ENCODE measurements at regions of chr12 and their contacts with region 1.

Region 1: GRCh38 chr12:110742718-110743570 is at the start of gene PPP1CC:
- DNase-seq: peak; percentile 88
- H3K4me3 Mint-ChIP-seq: peak within 1 kb of the TSS; percentile 100
- H3K27ac Mint-ChIP-seq: peak within 1 kb of the TSS; percentile 99
- H3K4me1 Mint-ChIP-seq: peaks cover 45% of the 10 kb centered on the region
- H3K27me3 Mint-ChIP-seq: no peaks in the 10 kb centered on the region
- total RNA-seq, gene PPP1CC: 449 and 469 TPM in 2 replicates

Region 2: GRCh38 chr12:110583137-110584059 is 159.5 kb before region 1 on chr12 and contains the start of gene PPTC7:
- intact Hi-C with region 1: loop called (anchors 2 kb)
- DNase-seq: peak; percentile 93
- H3K4me3 Mint-ChIP-seq: peak within 1 kb of the TSS; percentile 95
- H3K27ac Mint-ChIP-seq: peak within 1 kb of the TSS; percentile 96
- H3K4me1 Mint-ChIP-seq: peaks cover 61% of the 10 kb centered on the region
- H3K27me3 Mint-ChIP-seq: peaks cover 3% of the 10 kb centered on the region
- total RNA-seq, gene PPTC7: 57.9 and 59.1 TPM in 2 replicates

Region 3: GRCh38 chr12:110619534-110619953 is 123.4 kb before region 1 on chr12:
- intact Hi-C with region 1: loop called (anchors 1 kb)
- DNase-seq: no peak
- H3K4me3 Mint-ChIP-seq: peak overlapping the region; percentile 37
- H3K27ac Mint-ChIP-seq: peak overlapping the region; percentile 77
- H3K4me1 Mint-ChIP-seq: peaks cover 10% of the 10 kb centered on the region
- H3K27me3 Mint-ChIP-seq: peaks cover 4% of the 10 kb centered on the region

Region 4: GRCh38 chr12:110698171-110698902 is 44.6 kb before region 1 on chr12:
- intact Hi-C with region 1: loop called (anchors 1 kb)
- DNase-seq: peak; percentile 78
- H3K4me3 Mint-ChIP-seq: no peak overlapping the region
- H3K27ac Mint-ChIP-seq: peak overlapping the region; percentile 85
- H3K4me1 Mint-ChIP-seq: peaks cover 19% of the 10 kb centered on the region
- H3K27me3 Mint-ChIP-seq: peaks cover 2% of the 10 kb centered on the region

Region 5: DNA sequence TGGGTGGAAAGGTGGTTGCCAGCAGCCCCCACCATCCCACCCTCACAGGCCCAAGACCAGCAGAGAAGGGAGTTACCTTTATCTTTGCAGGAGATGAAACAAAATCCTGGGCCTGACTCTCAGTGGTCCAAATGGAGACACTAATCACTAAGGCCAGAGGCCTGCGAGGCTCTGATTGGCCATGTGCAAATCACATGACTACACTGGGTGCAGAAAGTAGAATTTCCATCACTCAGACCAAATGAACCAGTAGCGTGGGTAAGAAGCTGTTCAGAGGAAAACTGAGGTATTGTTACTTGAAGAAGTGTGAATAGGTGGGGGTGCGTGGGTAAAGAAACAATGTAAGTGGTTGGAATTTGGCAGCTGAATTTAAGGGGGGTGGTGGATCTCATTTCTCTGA is 19.9 kb after region 1 on chr12:
- intact Hi-C with region 1: loop called (anchors 1 kb)
- DNase-seq: no peak
- H3K4me3 Mint-ChIP-seq: peak overlapping the region; percentile 69
- H3K27ac Mint-ChIP-seq: peak overlapping the region; percentile 90
- H3K4me1 Mint-ChIP-seq: peaks cover 27% of the 10 kb centered on the region
- H3K27me3 Mint-ChIP-seq: peaks cover 5% of the 10 kb centered on the region

Region 6: GRCh38 chr12:110826592-110827200 is 83.8 kb after region 1 on chr12:
- intact Hi-C with region 1: loop called (anchors 1 kb)
- DNase-seq: peak; percentile 79
- H3K4me3 Mint-ChIP-seq: peak overlapping the region; percentile 40
- H3K27ac Mint-ChIP-seq: peak overlapping the region; percentile 78
- H3K4me1 Mint-ChIP-seq: peaks cover 12% of the 10 kb centered on the region
- H3K27me3 Mint-ChIP-seq: peaks cover 8% of the 10 kb centered on the region

Region 7: GRCh38 chr12:110917466-110917865 is 174.5 kb after region 1 on chr12:
- intact Hi-C with region 1: no loop called
- DNase-seq: no peak
- H3K4me3 Mint-ChIP-seq: no peak overlapping the region
- H3K27ac Mint-ChIP-seq: no peak overlapping the region
- H3K4me1 Mint-ChIP-seq: no peaks in the 10 kb centered on the region
- H3K27me3 Mint-ChIP-seq: peaks cover 7% of the 10 kb centered on the region

Measured in activated T-helper 1 cell treated with anti-CD3 and anti-CD28 coated beads, Interleukin-12 subunit alpha, Interleukin-12 subunit beta, Interleukin-2, Interleukin-4 antibody, amounts not matched to agents 30 ng/mL and 10 ng/mL and 1 ng/mL, durations not matched to agents 14 hours and 24 hours and 36 hours (primary cell).